ENCODE measurements at regions of chr6 and their contacts with region 1.

Region 1: GRCh38 chr6:99822741-99823512 is 171.1 kb downstream of the MCHR2 start:
- DNase-seq: peak; percentile 19
- H3K4me3 ChIP-seq: no peak overlapping the region
- CTCF ChIP-seq: peak; percentile 31

Region 2: GRCh38 chr6:99467509-99468106 is 355.3 kb before region 1 on chr6:
- CTCF ChIA-PET with region 1: interaction called, 10 read pairs
- POLR2A ChIA-PET with region 1: no interaction called
- DNase-seq: no peak
- H3K4me3 ChIP-seq: no peak overlapping the region
- CTCF ChIP-seq: peak; percentile 44

Measured in AG04449 (cell line).